ENCODE measurements at regions of chr3 and their contacts with region 1.

Region 1: GRCh38 chr3:140863580-140864009 is 78.0 kb upstream of the SLC25A36 start:
- DNase-seq: peak; percentile 69
- H3K4me3 Mint-ChIP-seq: no peak overlapping the region
- H3K27ac Mint-ChIP-seq: no peak overlapping the region
- H3K4me1 Mint-ChIP-seq: no peaks in the 10 kb centered on the region
- H3K27me3 Mint-ChIP-seq: peaks cover 25% of the 10 kb centered on the region
- CTCF ChIP-seq: peak; percentile 60

Region 2: DNA sequence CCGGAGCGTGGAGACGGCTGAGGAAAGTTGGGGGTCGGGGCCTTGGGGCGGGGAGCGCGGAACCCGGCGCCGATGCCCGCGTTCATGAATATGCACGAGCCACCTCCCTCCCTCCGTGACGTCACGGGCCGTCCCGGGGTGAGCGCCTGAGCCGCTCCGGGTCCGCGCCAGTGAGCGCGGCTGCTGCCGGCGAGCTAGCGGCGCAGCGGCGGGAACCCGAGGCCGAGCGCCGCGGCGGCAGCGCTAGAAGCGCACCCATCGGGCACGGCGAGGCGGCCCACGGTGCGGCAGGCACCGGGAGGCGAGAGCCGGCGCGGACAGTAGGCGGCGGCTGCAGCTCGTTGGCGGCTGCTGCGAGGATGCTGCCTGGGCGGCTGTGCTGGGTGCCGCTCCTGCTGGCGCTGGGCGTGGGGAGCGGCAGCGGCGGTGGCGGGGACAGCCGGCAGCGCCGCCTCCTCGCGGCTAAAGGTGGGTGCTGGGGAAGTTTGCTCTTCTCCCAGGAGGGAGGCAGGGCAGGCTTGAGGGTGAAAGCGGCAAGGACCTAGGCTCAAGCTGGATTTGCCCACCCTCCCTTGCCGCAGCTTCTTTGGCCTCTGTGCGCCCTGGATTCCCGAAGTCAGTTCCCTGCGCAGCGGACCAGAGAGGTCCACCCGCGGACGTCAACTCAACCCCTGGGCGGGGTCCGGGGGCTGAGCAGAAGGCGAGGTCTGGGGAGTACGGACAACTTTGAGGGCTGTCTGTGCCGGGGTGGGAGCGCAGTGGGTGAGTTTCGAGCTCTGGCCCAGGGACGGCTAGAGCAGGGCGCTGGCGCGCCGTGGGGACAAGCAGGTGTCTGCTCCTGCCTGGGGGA is 928.4 kb before region 1 on chr3 and contains the start of gene CLSTN2:
- CTCF ChIA-PET with region 1: interaction called, 7 read pairs
- POLR2A ChIA-PET with region 1: interaction called, 4 read pairs
- intact Hi-C with region 1: loop called (anchors 1 kb)
- DNase-seq: no peak
- H3K4me3 Mint-ChIP-seq: no peak within 1 kb of the TSS
- H3K27ac Mint-ChIP-seq: no peak within 1 kb of the TSS
- H3K4me1 Mint-ChIP-seq: no peaks in the 10 kb centered on the region
- H3K27me3 Mint-ChIP-seq: peaks cover 30% of the 10 kb centered on the region
- CTCF ChIP-seq: no peak
- total RNA-seq, gene CLSTN2: not detected in 2 replicates

Region 3: GRCh38 chr3:140128631-140129030 is 735.0 kb before region 1 on chr3:
- CTCF ChIA-PET with region 1: interaction called, 5 read pairs
- POLR2A ChIA-PET with region 1: no interaction called
- intact Hi-C with region 1: loop called (anchors 1 kb)
- DNase-seq: peak; percentile 56
- H3K4me3 Mint-ChIP-seq: no peak overlapping the region
- H3K27ac Mint-ChIP-seq: no peak overlapping the region
- H3K4me1 Mint-ChIP-seq: no peaks in the 10 kb centered on the region
- H3K27me3 Mint-ChIP-seq: no peaks in the 10 kb centered on the region
- CTCF ChIP-seq: peak; percentile 26

Region 4: DNA sequence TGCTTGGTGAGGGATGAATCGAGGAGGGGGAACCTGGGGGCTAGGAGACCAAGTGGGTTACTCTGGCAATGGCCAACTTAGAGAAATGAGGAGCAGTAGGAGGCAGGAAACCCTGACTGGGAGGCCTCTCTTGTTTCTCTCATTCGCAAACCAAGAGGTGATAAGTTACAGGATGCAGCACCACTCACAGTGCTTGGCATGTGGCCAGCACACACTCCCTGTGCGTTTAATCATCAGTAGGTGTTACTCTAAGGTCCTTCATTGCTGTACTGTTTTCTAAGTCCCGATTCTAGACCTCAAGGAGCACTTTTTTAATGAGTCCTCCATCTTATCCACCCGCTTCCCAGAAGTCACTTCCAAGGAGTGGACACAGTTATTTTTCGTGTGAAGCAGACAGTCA is 499.8 kb before region 1 on chr3:
- CTCF ChIA-PET with region 1: no interaction called
- POLR2A ChIA-PET with region 1: no interaction called
- intact Hi-C with region 1: loop called (anchors 5 kb)
- DNase-seq: peak; percentile 47
- H3K4me3 Mint-ChIP-seq: no peak overlapping the region
- H3K27ac Mint-ChIP-seq: no peak overlapping the region
- H3K4me1 Mint-ChIP-seq: no peaks in the 10 kb centered on the region
- H3K27me3 Mint-ChIP-seq: peaks cover 28% of the 10 kb centered on the region
- CTCF ChIP-seq: no peak

Region 5: GRCh38 chr3:140552898-140553297 is 310.7 kb before region 1 on chr3:
- CTCF ChIA-PET with region 1: interaction called, 5 read pairs
- POLR2A ChIA-PET with region 1: no interaction called
- intact Hi-C with region 1: loop called (anchors 2 kb)
- DNase-seq: peak; percentile 57
- H3K4me3 Mint-ChIP-seq: no peak overlapping the region
- H3K27ac Mint-ChIP-seq: no peak overlapping the region
- H3K4me1 Mint-ChIP-seq: peaks cover 5% of the 10 kb centered on the region
- H3K27me3 Mint-ChIP-seq: no peaks in the 10 kb centered on the region
- CTCF ChIP-seq: no peak

Measured in MCF 10A (cell line).